T-cell (primary cell): ENCODE measurements at regions of chr1 and their contacts with region 1.

Region 1: GRCh38 chr1:154198756-154199562 is 7.1 kb upstream of the TPM3 start:
- DNase-seq: peak in 30 of 35 experiments; percentile 1 to 80 (median 32)
- ATAC-seq: peak; percentile 77 to 85 (median 82)
- H3K4me3 ChIP-seq: no peak overlapping the region
- H3K4me3 Mint-ChIP-seq: no peak overlapping the region
- H3K27ac ChIP-seq: no peak overlapping the region
- H3K27ac Mint-ChIP-seq: no peak overlapping the region
- H3K4me1 ChIP-seq: peaks cover 0 to 4% of the 10 kb centered on the region in 2 experiments
- H3K4me1 Mint-ChIP-seq: no peaks in the 10 kb centered on the region
- H3K27me3 ChIP-seq: peaks cover 0 to 2% of the 10 kb centered on the region in 2 experiments
- H3K27me3 Mint-ChIP-seq: peaks cover 0 to 6% of the 10 kb centered on the region in 2 donors

Region 2: GRCh38 chr1:154157520-154158306 is 41.2 kb before region 1 on chr1:
- CTCF ChIA-PET with region 1: interaction called in 1 of 2 experiments, 12 read pairs
- POLR2A ChIA-PET with region 1: no interaction called
- DNase-seq: peak; percentile 38 to 89 (median 73)
- ATAC-seq: peak; percentile 99
- H3K4me3 ChIP-seq: no peak overlapping the region
- H3K4me3 Mint-ChIP-seq: peak overlapping the region; percentile 57 to 72 (median 67)
- H3K27ac ChIP-seq: peak overlapping the region; percentile 77
- H3K27ac Mint-ChIP-seq: peak overlapping the region; percentile 97 to 98
- H3K4me1 ChIP-seq: peaks cover 53 to 60% of the 10 kb centered on the region in 2 experiments
- H3K4me1 Mint-ChIP-seq: peaks cover 64 to 71% (median 70%) of the 10 kb centered on the region in 3 donors
- H3K27me3 ChIP-seq: no peaks in the 10 kb centered on the region
- H3K27me3 Mint-ChIP-seq: no peaks in the 10 kb centered on the region

Region 3: DNA sequence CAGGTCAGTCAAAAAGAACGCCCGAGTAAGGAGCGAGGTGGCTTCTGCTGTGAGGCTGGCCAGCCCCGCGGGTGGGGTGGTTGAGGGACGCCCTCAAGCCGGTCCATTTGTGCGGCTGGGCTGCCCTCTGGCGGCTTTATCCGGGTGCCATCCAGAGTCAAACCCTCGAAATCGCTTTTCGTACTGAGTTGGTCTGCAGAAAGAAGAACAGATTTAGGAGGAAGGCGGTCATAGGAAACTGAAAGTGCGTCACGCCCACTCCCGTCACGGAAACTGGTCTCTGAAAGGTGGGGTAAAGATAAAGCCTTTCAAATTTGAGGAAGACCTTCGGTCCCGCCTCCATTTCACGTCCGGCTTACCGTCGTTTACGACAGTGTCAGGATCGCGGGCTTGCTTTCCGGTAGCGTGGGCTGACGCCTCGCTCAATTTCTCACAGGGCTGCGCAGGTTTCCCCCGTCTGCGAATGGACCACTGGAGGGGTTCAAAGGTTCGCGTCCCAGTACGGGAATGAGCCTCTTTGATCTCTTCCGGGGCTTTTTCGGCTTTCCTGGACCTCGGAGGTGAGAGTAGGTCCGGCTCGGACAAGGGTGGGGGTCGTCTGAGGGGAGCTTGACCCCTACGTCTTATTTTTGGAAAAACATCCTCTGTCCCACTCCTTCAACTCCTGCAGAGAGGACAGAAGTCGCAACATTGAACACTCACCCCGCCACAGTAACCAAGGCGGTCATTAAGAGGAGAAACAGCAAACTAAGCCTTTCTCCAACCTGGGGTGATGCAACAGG is 73.4 kb after region 1 on chr1 and contains the start of gene HAX1:
- CTCF ChIA-PET with region 1: interaction called, 3 to 8 read pairs
- POLR2A ChIA-PET with region 1: interaction called in 1 of 2 experiments, 12 read pairs
- DNase-seq: peak; percentile 86 to 99 (median 96)
- ATAC-seq: peak; percentile 92 to 93 (median 92)
- H3K4me3 ChIP-seq: peak within 1 kb of the TSS; percentile 98 to 99
- H3K4me3 Mint-ChIP-seq: peak within 1 kb of the TSS; percentile 97 to 100 (median 97)
- H3K27ac ChIP-seq: peak within 1 kb of the TSS; percentile 96
- H3K27ac Mint-ChIP-seq: peak within 1 kb of the TSS; percentile 98
- H3K4me1 ChIP-seq: peaks cover 17 to 28% of the 10 kb centered on the region in 2 experiments
- H3K4me1 Mint-ChIP-seq: peaks cover 34 to 41% (median 39%) of the 10 kb centered on the region in 3 donors
- H3K27me3 ChIP-seq: no peaks in the 10 kb centered on the region
- H3K27me3 Mint-ChIP-seq: no peaks in the 10 kb centered on the region
- total RNA-seq, gene HAX1: 69.4 to 97.7 (median 92.5) TPM

Region 4: GRCh38 chr1:154318386-154318785 is 119.4 kb after region 1 on chr1:
- CTCF ChIA-PET with region 1: no interaction called
- POLR2A ChIA-PET with region 1: no interaction called
- DNase-seq: no peak
- ATAC-seq: no peak
- H3K4me3 ChIP-seq: no peak overlapping the region
- H3K4me3 Mint-ChIP-seq: no peak overlapping the region
- H3K27ac ChIP-seq: no peak overlapping the region
- H3K27ac Mint-ChIP-seq: no peak overlapping the region
- H3K4me1 ChIP-seq: no peaks in the 10 kb centered on the region
- H3K4me1 Mint-ChIP-seq: no peaks in the 10 kb centered on the region
- H3K27me3 ChIP-seq: peaks cover 0 to 14% of the 10 kb centered on the region in 2 experiments
- H3K27me3 Mint-ChIP-seq: peaks cover 0 to 2% of the 10 kb centered on the region in 2 donors